ENCODE measurements at regions of chr1 and their contacts with region 1.

Region 1: DNA sequence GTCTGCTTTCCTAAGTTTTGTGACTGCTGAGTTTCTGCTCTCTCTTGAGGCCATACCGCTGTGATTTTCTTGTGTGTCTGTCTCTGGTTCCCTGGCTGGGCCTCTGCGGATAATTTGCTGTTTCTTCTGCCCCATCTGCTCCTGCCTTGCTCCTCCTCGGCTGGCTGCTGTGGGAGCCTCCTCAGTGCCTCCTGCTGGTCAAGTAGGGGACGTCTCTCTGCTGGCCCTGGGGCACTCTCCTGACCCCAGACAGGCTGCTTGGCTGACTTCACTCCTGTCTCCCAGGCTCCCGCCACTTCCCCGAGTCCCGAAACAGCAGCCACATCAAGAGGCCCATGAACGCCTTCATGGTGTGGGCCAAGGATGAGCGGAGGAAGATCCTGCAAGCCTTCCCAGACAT is 28.5 kb downstream of the ETNK2 start:
- DNase-seq: no peak
- H3K4me3 ChIP-seq: no peak overlapping the region
- H3K27ac ChIP-seq: no peak overlapping the region
- H3K4me1 ChIP-seq: peaks cover 0 to 30% (median 9%) of the 10 kb centered on the region in 3 donors
- H3K27me3 ChIP-seq: no peaks in the 10 kb centered on the region
- CTCF ChIP-seq: peak in 2 of 6 experiments; percentile 26 to 49
- POLR2A ChIP-seq: no peak

Region 2: GRCh38 chr1:203871107-203871875 is 252.1 kb before region 1 on chr1:
- intact Hi-C with region 1: loop called (anchors 5 kb)
- DNase-seq: no peak
- H3K4me3 ChIP-seq: no peak overlapping the region
- H3K27ac ChIP-seq: peak overlapping the region in 3 of 4 donors; percentile 2 to 39 (median 14)
- H3K4me1 ChIP-seq: peaks cover 0 to 10% (median 0%) of the 10 kb centered on the region in 3 donors
- H3K27me3 ChIP-seq: no peaks in the 10 kb centered on the region
- CTCF ChIP-seq: peak; percentile 31 to 95 (median 78)
- POLR2A ChIP-seq: no peak

Region 3: DNA sequence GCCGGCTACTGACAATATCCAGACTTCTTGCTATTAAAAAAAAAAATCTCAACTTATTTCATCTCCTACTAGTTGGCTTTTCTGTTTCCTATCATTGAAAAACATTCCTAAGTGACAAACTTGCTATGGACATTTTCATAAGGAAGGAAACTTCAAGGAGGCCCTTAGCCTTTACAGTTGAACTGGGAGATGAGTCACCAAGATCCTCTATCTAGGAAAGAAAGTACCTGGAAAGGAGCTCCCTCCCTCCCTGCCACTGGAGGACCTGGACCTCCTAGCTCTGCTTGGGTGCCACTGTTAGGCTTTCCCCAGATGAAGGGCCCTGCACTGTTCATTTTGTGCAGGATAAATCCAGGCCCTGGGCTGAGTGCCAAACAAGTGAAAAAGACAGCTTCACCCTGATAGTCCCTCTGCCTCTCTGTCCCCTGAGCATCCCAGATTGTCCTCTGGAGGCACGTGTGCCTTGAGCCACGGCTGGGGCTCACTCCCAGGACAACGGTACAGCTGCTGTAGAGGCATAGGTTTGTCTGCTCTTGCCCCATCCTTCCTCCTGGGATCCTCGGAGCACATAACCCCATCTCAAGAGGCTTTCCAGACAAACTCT is 90.6 kb before region 1 on chr1:
- intact Hi-C with region 1: no loop called
- DNase-seq: no peak
- H3K4me3 ChIP-seq: no peak overlapping the region
- H3K27ac ChIP-seq: no peak overlapping the region
- H3K4me1 ChIP-seq: no peaks in the 10 kb centered on the region
- H3K27me3 ChIP-seq: peaks cover 0 to 9% (median 0%) of the 10 kb centered on the region in 4 donors
- CTCF ChIP-seq: no peak
- POLR2A ChIP-seq: no peak

Region 4: GRCh38 chr1:204065174-204065985 is 58.0 kb before region 1 on chr1:
- intact Hi-C with region 1: loop called (anchors 5 kb)
- DNase-seq: no peak
- H3K4me3 ChIP-seq: peak overlapping the region in 1 of 4 donors; percentile 36
- H3K27ac ChIP-seq: no peak overlapping the region
- H3K4me1 ChIP-seq: peaks cover 0 to 11% (median 0%) of the 10 kb centered on the region in 3 donors
- H3K27me3 ChIP-seq: no peaks in the 10 kb centered on the region
- CTCF ChIP-seq: no peak
- POLR2A ChIP-seq: no peak

Region 5: GRCh38 chr1:204213668-204214662 is 90.6 kb after region 1 on chr1 and contains the start of gene GOLT1A:
- intact Hi-C with region 1: no loop called
- DNase-seq: no peak
- H3K4me3 ChIP-seq: peak within 1 kb of the TSS in 3 of 4 donors; percentile 23 to 47 (median 30)
- H3K27ac ChIP-seq: no peak within 1 kb of the TSS
- H3K4me1 ChIP-seq: peaks cover 9 to 12% (median 10%) of the 10 kb centered on the region in 3 donors
- H3K27me3 ChIP-seq: peaks cover 0 to 20% (median 0%) of the 10 kb centered on the region in 4 donors
- CTCF ChIP-seq: peak in 5 of 6 experiments; percentile 55 to 78 (median 66)
- POLR2A ChIP-seq: no peak
- total RNA-seq, gene GOLT1A: 0.38 TPM in 1 of 4 donors, not detected in the others